Activated naive CD4-positive, alpha-beta T cell treated with anti-CD3 and anti-CD28 coated beads for 36 hours (primary cell): ENCODE measurements at regions of chr12 and their contacts with region 1.

Region 1: DNA sequence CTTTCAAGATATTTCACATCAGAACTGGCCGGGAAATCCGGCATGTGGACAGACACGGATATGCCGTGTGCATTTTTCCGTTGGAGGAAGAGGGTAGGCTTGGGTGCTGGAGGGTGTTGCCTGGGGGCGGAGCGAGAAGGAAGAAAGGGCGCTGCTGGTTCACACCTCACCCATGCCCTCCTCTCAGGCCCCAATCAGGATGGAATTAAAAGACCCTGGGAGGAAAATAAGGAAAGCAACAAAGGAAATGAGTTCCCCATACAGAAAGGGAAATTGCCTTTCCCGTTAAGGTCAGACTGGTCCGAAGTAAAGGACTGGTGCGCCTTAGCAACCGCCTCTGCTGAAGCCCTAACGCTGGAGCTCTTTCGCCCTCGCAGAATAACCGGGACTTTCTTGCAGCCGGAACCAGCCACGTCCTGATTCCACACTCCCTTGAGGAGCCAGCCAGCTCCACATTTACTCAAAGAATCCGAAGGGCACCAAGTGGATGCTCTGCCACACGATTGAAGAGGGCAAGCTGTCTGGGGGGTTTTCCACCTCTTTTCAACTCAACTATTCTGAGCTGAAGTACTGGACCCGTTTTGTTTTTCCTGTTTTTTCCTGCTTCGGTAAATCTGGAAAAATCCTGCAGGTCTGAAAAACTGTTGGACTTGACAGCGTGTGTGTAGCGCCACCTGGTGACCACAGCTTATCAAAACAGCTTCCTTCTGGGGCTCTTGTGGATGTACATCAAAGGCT is 37.7 kb upstream of the BCL2L14 start:
- DNase-seq: peak; percentile 86
- H3K4me3 Mint-ChIP-seq: peak overlapping the region; percentile 66
- H3K27ac Mint-ChIP-seq: peak overlapping the region; percentile 78
- H3K4me1 Mint-ChIP-seq: peaks cover 46% of the 10 kb centered on the region
- H3K27me3 Mint-ChIP-seq: no peaks in the 10 kb centered on the region

Region 2: GRCh38 chr12:11581179-11581755 is 451.8 kb before region 1 on chr12:
- CTCF ChIA-PET with region 1: interaction called, 110 read pairs
- intact Hi-C with region 1: loop called (anchors 1 kb)
- DNase-seq: peak; percentile 84
- H3K4me3 Mint-ChIP-seq: no peak overlapping the region
- H3K27ac Mint-ChIP-seq: no peak overlapping the region
- H3K4me1 Mint-ChIP-seq: peaks cover 18% of the 10 kb centered on the region
- H3K27me3 Mint-ChIP-seq: peaks cover 6% of the 10 kb centered on the region

Region 3: DNA sequence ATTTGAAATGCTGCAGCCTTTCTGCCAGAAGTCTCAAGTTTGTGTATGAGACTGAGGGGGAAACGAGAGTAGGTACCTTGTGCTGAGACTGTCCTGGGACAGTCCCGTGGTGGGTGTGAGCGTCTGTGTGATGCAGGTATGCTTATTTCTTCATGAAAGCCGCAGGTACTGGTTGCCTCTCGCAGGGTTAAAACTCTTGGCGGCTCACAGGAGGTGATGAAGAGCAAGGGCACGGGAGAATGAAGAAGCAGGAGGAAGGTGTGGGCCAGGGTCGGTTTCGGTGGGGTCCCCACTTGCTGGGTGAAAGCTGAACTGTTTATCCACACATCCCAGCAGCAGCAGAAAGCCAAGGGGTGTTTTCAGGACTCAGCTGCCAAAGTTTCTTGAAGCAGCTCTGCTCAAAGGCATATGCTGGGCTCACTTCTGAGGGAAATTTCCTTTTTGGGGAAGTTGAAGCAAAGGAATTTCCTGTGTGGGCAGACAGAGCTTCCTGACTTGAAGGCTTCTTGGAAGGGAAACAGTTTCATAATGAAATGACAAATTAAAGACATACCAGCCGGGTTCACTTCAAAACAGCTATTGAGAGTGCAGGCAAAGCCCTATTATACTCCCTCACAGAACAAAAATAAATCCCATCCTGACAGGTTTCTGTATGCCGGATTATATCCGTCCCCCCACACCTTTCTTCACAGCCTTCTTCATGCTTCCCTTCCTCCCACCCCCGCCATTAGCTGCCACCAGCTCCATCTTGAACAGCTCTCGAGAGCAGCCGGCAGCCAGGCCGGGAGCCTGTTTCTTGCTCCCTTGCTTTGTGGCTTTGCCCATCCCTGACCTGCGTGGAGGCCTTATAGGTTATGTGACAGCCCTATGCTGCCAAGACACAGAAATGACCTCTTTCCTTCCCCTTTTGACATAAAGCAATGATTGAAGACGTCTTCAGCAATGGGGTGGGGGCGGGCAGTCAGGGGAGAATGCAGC is 266.9 kb before region 1 on chr12:
- CTCF ChIA-PET with region 1: interaction called, 4 read pairs
- intact Hi-C with region 1: loop called (anchors 1 kb)
- DNase-seq: peak; percentile 92
- H3K4me3 Mint-ChIP-seq: peak overlapping the region; percentile 43
- H3K27ac Mint-ChIP-seq: peak overlapping the region; percentile 92
- H3K4me1 Mint-ChIP-seq: peaks cover 99% of the 10 kb centered on the region
- H3K27me3 Mint-ChIP-seq: no peaks in the 10 kb centered on the region

Region 4: GRCh38 chr12:11877869-11878780 is 154.9 kb before region 1 on chr12:
- CTCF ChIA-PET with region 1: interaction called, 4 read pairs
- intact Hi-C with region 1: loop called (anchors 5 kb)
- DNase-seq: peak; percentile 26
- H3K4me3 Mint-ChIP-seq: no peak overlapping the region
- H3K27ac Mint-ChIP-seq: no peak overlapping the region
- H3K4me1 Mint-ChIP-seq: peaks cover 47% of the 10 kb centered on the region
- H3K27me3 Mint-ChIP-seq: no peaks in the 10 kb centered on the region

Region 5: GRCh38 chr12:12070674-12071656 is 37.9 kb after region 1 on chr12 and contains the start of gene BCL2L14:
- CTCF ChIA-PET with region 1: interaction called, 3 read pairs
- intact Hi-C with region 1: loop called (anchors 1 kb)
- DNase-seq: peak; percentile 52
- H3K4me3 Mint-ChIP-seq: peak within 1 kb of the TSS; percentile 85
- H3K27ac Mint-ChIP-seq: peak within 1 kb of the TSS; percentile 90
- H3K4me1 Mint-ChIP-seq: peaks cover 36% of the 10 kb centered on the region
- H3K27me3 Mint-ChIP-seq: no peaks in the 10 kb centered on the region
- total RNA-seq, gene BCL2L14: 19.4 to 21.8 TPM

Region 6: DNA sequence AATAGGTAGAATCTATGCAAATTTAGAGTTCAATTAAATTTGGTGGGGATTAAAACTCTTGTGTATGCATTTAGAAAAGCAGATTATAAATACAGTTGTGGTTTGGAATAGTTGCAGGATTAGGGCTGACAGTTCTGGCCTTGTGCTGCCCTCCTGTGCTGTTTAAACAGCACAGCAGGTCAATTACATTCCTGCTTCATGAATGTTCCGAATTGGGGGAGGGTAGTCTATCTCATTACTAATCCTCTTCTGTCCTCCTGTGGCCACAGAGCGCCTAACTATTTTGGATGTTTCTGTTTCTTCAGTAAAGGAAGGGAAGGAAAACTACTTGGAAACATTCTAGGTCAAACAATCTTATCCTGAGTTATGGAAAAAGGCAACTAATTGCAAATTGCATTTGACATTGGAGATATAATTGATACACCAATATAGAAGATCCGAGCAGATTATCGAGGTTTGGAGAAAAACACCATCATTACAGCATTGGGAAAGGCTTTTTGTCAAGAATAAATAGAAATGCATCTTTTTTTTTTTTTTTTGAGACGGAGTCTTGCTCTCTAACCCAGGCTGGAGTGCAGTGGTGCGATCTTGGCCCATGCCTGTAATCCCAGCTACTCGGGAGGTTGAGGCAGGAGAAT is 671.7 kb after region 1 on chr12:
- CTCF ChIA-PET with region 1: no interaction called
- intact Hi-C with region 1: loop called (anchors 1 kb)
- DNase-seq: peak; percentile 60
- H3K4me3 Mint-ChIP-seq: no peak overlapping the region
- H3K27ac Mint-ChIP-seq: no peak overlapping the region
- H3K4me1 Mint-ChIP-seq: peaks cover 23% of the 10 kb centered on the region
- H3K27me3 Mint-ChIP-seq: no peaks in the 10 kb centered on the region